ENCODE measurements at regions of chr9 and their contacts with region 1.

Region 1: GRCh38 chr9:137070201-137070905 is at the start of gene SAPCD2:
- DNase-seq: peak; percentile 88
- ATAC-seq: peak; percentile 84
- H3K4me3 Mint-ChIP-seq: peak within 1 kb of the TSS; percentile 71
- H3K27ac Mint-ChIP-seq: peak within 1 kb of the TSS; percentile 95
- H3K4me1 Mint-ChIP-seq: peaks cover 34% of the 10 kb centered on the region
- H3K27me3 Mint-ChIP-seq: no peaks in the 10 kb centered on the region
- CTCF ChIP-seq: no peak
- total RNA-seq, gene SAPCD2: 52.0 to 67.0 TPM (median 53.6 TPM) in 3 replicates

Region 2: DNA sequence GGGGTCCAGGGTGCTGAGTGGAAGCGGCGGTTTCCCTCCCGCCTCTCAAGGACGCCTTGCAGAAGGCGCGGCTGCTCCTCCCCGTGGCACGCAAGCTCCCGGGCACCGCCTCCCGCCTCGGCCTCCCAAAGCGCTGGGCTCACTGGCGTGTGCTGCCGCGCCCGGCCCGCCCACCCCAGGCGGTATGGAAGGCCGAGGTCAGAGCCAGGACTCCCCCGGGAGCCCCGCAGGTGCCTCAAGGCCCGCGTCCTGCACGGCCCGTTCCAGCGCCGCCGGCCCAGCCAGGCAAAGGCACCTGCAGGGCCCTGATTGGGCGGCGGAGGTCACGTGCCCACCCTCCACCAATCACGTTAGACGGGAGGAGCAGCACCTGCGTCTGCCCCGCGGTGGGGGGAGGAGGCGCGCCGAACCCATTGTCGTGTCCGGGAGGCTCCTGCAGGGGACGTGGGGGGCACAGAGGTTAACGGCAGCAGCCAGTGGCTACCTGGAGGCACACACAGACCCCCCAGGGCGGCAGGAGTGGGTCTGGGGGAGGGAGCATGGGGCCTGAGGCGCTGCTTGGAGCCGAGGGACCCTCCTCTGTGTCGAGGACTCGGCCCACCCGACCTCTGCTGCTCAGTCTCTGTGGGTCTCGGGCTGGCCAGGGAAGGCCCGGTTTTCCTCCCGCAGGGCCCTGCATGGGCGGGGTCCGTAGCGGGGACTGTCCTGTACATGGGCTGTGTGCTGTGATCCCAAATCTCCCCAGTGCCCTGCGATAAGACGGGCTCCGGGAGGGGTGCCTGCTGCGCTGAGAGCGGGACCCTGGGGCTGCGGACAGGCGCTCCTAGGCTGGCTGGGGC is 120.3 kb before region 1 on chr9:
- CTCF ChIA-PET with region 1: interaction called, 23 read pairs
- POLR2A ChIA-PET with region 1: no interaction called
- DNase-seq: peak; percentile 97
- ATAC-seq: peak; percentile 81
- H3K4me3 Mint-ChIP-seq: peak overlapping the region; percentile 72
- H3K27ac Mint-ChIP-seq: no peak overlapping the region
- H3K4me1 Mint-ChIP-seq: peaks cover 7% of the 10 kb centered on the region
- H3K27me3 Mint-ChIP-seq: no peaks in the 10 kb centered on the region
- CTCF ChIP-seq: no peak

Region 3: DNA sequence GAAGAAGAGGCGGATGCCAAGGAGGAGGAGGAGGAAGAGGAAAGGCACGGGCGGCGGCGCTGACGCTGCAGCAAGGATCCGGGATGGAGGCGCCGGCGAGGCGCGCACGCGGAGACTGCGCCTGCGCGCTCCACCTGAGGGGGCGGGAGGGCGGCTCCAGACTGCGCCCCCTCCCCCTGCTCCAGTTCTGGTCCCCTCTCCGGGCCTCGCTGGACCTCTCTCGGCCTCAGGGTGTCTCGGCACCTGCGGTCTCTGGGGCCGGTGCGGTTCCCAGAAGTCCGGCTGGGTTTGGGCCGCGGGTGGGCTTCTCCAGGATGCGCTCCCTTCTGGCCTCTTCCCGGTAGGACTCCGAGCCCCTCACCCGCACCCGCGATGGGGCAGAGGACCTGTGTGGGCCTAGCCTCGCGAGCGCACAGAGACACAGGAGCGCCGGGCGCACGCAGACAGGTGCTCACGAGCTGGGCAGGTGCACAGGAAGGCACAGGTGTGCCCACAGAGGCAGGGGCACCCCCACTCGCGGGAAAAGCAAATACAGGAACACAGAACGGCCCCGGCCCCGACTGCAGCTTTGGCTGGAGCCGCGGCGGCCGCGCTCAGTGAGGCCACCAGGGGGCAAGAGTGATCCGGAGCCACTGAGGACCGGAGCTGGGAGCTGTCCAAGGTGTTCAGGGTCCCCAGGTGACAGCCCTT is 24.1 kb before region 1 on chr9 and contains the start of gene NPDC1:
- CTCF ChIA-PET with region 1: interaction called, 179 read pairs
- POLR2A ChIA-PET with region 1: interaction called, 3 read pairs
- DNase-seq: peak; percentile 94
- ATAC-seq: peak; percentile 69
- H3K4me3 Mint-ChIP-seq: peak within 1 kb of the TSS; percentile 77
- H3K27ac Mint-ChIP-seq: no peak within 1 kb of the TSS
- H3K4me1 Mint-ChIP-seq: peaks cover 10% of the 10 kb centered on the region
- H3K27me3 Mint-ChIP-seq: peaks cover 47% of the 10 kb centered on the region
- CTCF ChIP-seq: peak; percentile 83
- total RNA-seq, gene NPDC1: 64.3 to 68.8 TPM (median 64.5 TPM) in 3 replicates

Region 4: GRCh38 chr9:137114610-137115391 is 44.4 kb after region 1 on chr9 and contains the start of gene DPP7:
- CTCF ChIA-PET with region 1: interaction called, 12 read pairs
- POLR2A ChIA-PET with region 1: interaction called, 5 read pairs
- DNase-seq: no peak
- ATAC-seq: peak; percentile 21
- H3K4me3 Mint-ChIP-seq: peak within 1 kb of the TSS; percentile 52
- H3K27ac Mint-ChIP-seq: no peak within 1 kb of the TSS
- H3K4me1 Mint-ChIP-seq: no peaks in the 10 kb centered on the region
- H3K27me3 Mint-ChIP-seq: peaks cover 29% of the 10 kb centered on the region
- CTCF ChIP-seq: no peak
- total RNA-seq, gene DPP7: 38.9 to 43.7 TPM (median 42.1 TPM) in 3 replicates

Region 5: DNA sequence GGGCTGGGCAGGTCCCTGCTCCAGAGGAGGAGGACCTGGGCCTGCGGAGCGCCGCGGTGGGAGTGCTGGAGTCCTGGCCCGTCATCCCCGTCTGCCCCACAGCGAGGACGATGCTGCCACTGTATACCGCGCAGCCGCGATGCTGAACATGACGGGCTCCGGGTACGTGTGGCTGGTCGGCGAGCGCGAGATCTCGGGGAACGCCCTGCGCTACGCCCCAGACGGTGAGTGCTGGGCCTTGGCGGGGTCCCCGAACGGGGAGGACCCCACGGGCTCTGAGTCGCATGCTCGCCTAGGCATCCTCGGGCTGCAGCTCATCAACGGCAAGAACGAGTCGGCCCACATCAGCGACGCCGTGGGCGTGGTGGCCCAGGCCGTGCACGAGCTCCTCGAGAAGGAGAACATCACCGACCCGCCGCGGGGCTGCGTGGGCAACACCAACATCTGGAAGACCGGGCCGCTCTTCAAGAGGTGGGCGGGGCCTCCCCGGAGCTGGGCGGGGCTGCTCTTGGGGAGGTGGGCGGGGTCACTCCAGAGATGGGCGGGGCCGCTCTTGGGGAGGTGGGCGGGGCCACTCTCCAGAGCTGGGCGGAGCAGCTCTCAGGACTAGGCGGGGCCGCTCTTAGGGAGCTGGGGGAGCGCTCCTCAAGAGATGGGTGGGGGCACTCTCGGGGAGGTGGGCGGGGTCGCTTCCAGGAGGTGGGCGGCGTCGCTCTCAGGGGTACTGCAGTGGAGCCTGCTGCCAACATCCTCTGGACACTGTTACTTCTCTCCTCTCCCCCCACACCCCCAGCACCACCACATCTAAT is 86.4 kb after region 1 on chr9:
- CTCF ChIA-PET with region 1: interaction called, 19 read pairs
- POLR2A ChIA-PET with region 1: interaction called, 3 read pairs
- DNase-seq: peak; percentile 75
- ATAC-seq: peak; percentile 72
- H3K4me3 Mint-ChIP-seq: peak overlapping the region; percentile 64
- H3K27ac Mint-ChIP-seq: no peak overlapping the region
- H3K4me1 Mint-ChIP-seq: no peaks in the 10 kb centered on the region
- H3K27me3 Mint-ChIP-seq: peaks cover 66% of the 10 kb centered on the region
- CTCF ChIP-seq: no peak

Region 6: GRCh38 chr9:137200311-137201204 is 130.2 kb after region 1 on chr9 and contains the start of gene TPRN:
- CTCF ChIA-PET with region 1: interaction called, 11 read pairs
- POLR2A ChIA-PET with region 1: interaction called, 4 read pairs
- DNase-seq: peak; percentile 100
- ATAC-seq: peak; percentile 97
- H3K4me3 Mint-ChIP-seq: peak within 1 kb of the TSS; percentile 84
- H3K27ac Mint-ChIP-seq: peak within 1 kb of the TSS; percentile 91
- H3K4me1 Mint-ChIP-seq: peaks cover 33% of the 10 kb centered on the region
- H3K27me3 Mint-ChIP-seq: no peaks in the 10 kb centered on the region
- CTCF ChIP-seq: no peak
- total RNA-seq, gene TPRN: 33.4 to 43.1 TPM (median 38.1 TPM) in 3 replicates

Measured in WTC11 (cell line).